Mammary epithelial cell (primary cell): ENCODE measurements at regions of chr13 and their contacts with region 1.

Region 1: GRCh38 chr13:36395280-36395679 is 37.0 kb upstream of the CCNA1 start:
- DNase-seq: peak; percentile 20
- H3K4me3 ChIP-seq: no peak overlapping the region
- H3K27ac ChIP-seq: no peak overlapping the region
- H3K4me1 ChIP-seq: no peaks in the 10 kb centered on the region
- H3K27me3 ChIP-seq: no peaks in the 10 kb centered on the region
- CTCF ChIP-seq: peak; percentile 40 to 54

Region 2: GRCh38 chr13:35659796-35660195 is 735.5 kb before region 1 on chr13:
- CTCF ChIA-PET with region 1: no interaction called
- dilution Hi-C with region 1: no loop called
- in situ Hi-C with region 1: no loop called
- intact Hi-C with region 1: no loop called
- DNase-seq: no peak
- H3K4me3 ChIP-seq: no peak overlapping the region
- H3K27ac ChIP-seq: no peak overlapping the region
- H3K4me1 ChIP-seq: no peaks in the 10 kb centered on the region
- H3K27me3 ChIP-seq: no peaks in the 10 kb centered on the region
- CTCF ChIP-seq: no peak

Region 3: DNA sequence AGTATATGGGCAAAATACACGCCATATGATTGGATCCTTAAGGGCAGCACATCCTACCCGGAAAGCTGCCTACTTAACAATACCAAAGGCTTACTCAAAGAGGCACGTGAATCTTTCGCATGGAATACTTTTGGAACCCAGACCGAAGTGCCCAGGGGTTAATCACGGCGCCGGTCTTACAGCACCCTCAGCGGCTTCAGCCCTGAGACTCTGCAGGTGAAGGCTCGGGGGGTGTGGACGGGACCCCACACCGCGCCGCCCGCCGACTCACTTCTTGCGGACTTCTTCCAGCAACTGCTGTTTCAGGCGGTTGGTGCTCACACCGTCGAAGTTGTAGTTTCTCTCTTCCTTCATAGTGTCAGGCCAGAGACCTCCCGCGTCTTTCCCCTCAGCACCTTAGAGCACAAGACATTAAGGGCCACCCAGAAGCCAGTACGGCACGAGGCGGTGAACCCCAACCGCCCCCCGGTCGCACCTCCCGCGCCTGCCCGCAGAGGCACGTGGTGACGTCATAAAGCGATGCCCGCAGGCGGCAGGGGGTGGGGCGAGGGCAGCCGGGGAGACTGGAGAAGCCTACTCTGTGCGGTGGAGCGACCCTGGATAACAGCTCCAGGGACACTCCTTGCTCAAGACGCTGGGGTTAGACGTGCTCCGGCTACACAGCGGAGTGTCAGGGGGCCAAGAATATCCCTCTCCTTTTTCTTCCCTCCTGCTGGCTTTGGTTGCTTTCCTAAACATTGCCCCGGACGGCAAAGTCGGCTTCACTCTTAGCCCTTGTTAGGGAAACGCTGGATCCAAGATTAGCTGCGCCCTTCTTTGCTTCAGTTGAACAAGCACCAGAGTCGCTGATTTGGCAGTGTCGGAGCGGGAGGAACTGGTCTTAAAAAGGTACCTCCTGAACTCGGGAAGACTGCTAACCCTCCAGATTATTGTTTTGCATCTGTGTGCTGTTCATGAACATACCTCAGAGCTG is 97.6 kb before region 1 on chr13 and contains the start of gene CCDC169:
- CTCF ChIA-PET with region 1: no interaction called
- dilution Hi-C with region 1: no loop called
- in situ Hi-C with region 1: no loop called
- intact Hi-C with region 1: loop called (anchors 5 kb)
- DNase-seq: peak; percentile 29
- H3K4me3 ChIP-seq: peak within 1 kb of the TSS; percentile 42 to 59 (median 56)
- H3K27ac ChIP-seq: no peak within 1 kb of the TSS
- H3K4me1 ChIP-seq: no peaks in the 10 kb centered on the region
- H3K27me3 ChIP-seq: no peaks in the 10 kb centered on the region
- CTCF ChIP-seq: no peak
- total RNA-seq, gene CCDC169: 0.83 to 0.89 TPM